HCT116 (cell line): ENCODE measurements at regions of chr4 and their contacts with region 1.

Region 1: DNA sequence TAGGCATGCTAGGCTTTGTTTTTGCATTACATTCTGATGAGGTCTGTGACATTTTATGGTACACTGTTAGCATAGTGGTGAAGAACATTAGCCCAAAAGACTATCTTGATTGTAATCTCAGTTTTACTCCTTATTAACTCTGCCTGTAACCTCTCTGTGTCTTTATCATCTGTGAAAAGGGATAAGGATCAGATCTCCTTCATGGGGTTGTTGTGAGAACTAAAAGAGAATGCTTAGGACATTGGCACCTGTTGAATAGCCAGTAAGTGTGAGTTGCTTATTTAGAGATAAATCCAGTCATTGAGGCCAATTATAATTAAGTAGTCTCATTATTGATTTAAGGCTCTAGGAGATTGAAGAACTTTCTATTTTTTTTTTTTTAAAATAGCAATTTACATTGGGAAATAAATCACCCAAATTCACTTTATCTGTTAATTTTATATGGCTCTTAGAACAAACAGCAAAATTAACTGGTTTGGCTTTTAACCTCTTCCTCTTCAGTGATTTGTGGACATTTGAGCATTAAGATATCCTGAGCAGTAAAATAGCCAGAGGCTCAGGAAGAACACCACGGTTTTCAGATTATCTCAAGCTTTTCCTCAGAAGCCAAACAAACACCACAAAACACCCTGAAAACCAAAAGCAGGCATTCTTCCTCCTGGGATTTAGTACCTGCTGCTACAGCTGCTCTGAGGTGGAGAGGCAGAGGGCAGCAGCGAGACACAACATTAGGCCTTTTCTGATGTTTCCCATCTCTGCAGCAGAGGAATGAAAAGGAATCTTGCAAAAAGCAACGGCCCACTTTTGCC is 192.9 kb downstream of the ARHGAP10 start:
- DNase-seq: no peak
- ATAC-seq: peak; percentile 77
- H3K4me3 ChIP-seq: no peak overlapping the region
- H3K27ac ChIP-seq: no peak overlapping the region
- H3K4me1 ChIP-seq: no peaks in the 10 kb centered on the region
- H3K27me3 ChIP-seq: no peaks in the 10 kb centered on the region
- CTCF ChIP-seq: peak; percentile 25 to 46 (median 46); a peak in 3 of 6 replicates
- POLR2A ChIP-seq: no peak
- RAD21 ChIP-seq: peak; percentile 41; the same call in 1 of the 2 replicates

Region 2: GRCh38 chr4:148487181-148487580 is 562.4 kb after region 1 on chr4:
- CTCF ChIA-PET with region 1: no interaction called
- POLR2A ChIA-PET with region 1: no interaction called
- RAD21 ChIA-PET with region 1: no interaction called
- intact Hi-C with region 1: no loop called
- DNase-seq: no peak
- ATAC-seq: no peak
- H3K4me3 ChIP-seq: no peak overlapping the region
- H3K27ac ChIP-seq: no peak overlapping the region
- H3K4me1 ChIP-seq: no peaks in the 10 kb centered on the region
- H3K27me3 ChIP-seq: no peaks in the 10 kb centered on the region
- CTCF ChIP-seq: no peak
- POLR2A ChIP-seq: no peak
- RAD21 ChIP-seq: no peak

Region 3: DNA sequence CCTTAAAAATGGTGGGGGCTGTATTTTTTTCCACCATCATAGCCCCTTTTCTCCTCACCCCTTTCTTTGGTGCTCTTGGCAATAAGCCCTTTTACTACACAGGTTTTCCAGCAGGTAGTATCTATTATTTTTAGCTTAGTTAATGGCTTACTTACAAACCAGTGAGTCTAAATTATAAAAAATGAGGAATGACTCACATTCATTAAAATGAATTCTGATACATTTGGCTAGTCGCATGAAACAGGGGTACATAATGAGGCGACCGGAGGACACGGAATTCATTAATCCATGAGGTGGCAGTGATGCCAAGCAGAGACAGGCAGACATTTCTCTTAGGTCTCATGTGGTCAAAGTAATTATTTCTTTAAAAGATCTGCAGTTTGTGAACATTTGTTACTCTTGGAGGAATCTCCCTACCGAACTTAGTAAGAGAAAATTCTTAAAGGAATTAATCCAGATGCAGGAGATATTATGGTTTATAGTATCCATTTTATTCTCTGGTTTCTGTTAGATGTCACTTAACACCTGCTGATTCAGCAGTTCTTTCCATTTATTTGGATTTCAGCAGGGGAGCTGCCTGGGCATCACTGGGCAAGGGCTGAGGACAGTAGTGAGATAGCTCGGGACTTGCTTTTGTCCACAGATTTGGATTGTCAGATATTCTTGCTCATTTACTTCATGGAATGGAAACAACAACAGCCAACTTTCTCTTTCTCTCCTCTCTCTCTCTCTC is 1092.4 kb after region 1 on chr4:
- CTCF ChIA-PET with region 1: no interaction called
- POLR2A ChIA-PET with region 1: no interaction called
- RAD21 ChIA-PET with region 1: no interaction called
- intact Hi-C with region 1: loop called (anchors 10 kb)
- DNase-seq: no peak
- ATAC-seq: no peak
- H3K4me3 ChIP-seq: no peak overlapping the region
- H3K27ac ChIP-seq: no peak overlapping the region
- H3K4me1 ChIP-seq: no peaks in the 10 kb centered on the region
- H3K27me3 ChIP-seq: no peaks in the 10 kb centered on the region
- CTCF ChIP-seq: no peak
- POLR2A ChIP-seq: no peak
- RAD21 ChIP-seq: no peak